ENCODE measurements at regions of chr3 and their contacts with region 1.

Region 1: GRCh38 chr3:108090701-108091451 is at the start of gene CD47:
- DNase-seq: no peak
- ATAC-seq: peak; percentile 72
- H3K4me3 ChIP-seq: peak within 1 kb of the TSS; percentile 95
- H3K27ac ChIP-seq: peak within 1 kb of the TSS; percentile 95
- H3K4me1 ChIP-seq: peaks cover 12% of the 10 kb centered on the region; the same call in 1 of the 2 replicates
- H3K27me3 ChIP-seq: no peaks in the 10 kb centered on the region
- CTCF ChIP-seq: no peak
- EP300 ChIP-seq: no peak
- POLR2A ChIP-seq: peak; percentile 85
- RAD21 ChIP-seq: no peak
- polyA plus RNA-seq, gene CD47: 22.9 to 61.6 TPM

Region 2: GRCh38 chr3:107938143-107938542 is 152.7 kb before region 1 on chr3:
- CTCF ChIA-PET with region 1: no interaction called
- POLR2A ChIA-PET with region 1: no interaction called
- RAD21 ChIA-PET with region 1: no interaction called
- SMC1A ChIA-PET with region 1: no interaction called
- in situ Hi-C with region 1: no loop called
- intact Hi-C with region 1: no loop called
- DNase-seq: no peak
- ATAC-seq: no peak
- H3K4me3 ChIP-seq: no peak overlapping the region
- H3K27ac ChIP-seq: no peak overlapping the region
- H3K4me1 ChIP-seq: no peaks in the 10 kb centered on the region
- H3K27me3 ChIP-seq: no peaks in the 10 kb centered on the region; a peak in 1 of 4 replicates
- CTCF ChIP-seq: peak; percentile 19 to 47 (median 25); a peak in 4 of 6 replicates
- EP300 ChIP-seq: no peak
- POLR2A ChIP-seq: no peak
- RAD21 ChIP-seq: peak; percentile 62

Region 3: DNA sequence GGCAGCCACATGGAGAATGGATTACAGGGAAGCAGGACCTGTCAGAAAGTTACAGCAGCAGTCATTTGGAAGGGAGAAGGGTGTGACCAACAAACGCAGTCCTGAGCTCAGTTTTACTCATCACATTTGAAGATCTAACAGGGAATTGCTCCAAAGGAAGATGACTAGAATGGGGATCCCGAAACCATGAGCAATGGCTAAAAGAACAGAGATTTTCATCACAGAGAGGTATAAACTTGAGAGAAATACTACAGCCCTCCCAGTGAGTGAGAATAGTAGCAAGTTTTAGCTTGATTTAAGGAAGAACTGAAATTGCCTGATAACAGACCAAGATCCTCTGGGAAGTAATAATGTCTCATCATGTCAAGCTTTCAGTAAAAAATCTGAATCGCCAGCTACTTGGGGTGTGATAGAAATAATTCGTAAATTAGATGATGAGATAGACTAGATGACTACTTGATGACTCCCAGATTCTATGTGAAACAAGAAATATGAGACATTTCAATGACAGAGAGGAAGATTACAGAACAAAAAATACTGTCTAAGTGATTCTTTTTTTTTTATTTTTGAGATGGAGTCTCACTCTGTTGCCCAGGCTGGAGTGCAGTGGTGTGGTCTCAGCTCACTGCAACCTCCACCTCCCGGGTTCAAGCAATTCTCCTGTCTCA is 17.0 kb before region 1 on chr3:
- CTCF ChIA-PET with region 1: interaction called, 4 read pairs
- POLR2A ChIA-PET with region 1: interaction called, 5 read pairs
- RAD21 ChIA-PET with region 1: interaction called, 4 read pairs
- SMC1A ChIA-PET with region 1: interaction called, 20 read pairs
- in situ Hi-C with region 1: no loop called
- intact Hi-C with region 1: no loop called
- DNase-seq: no peak
- ATAC-seq: no peak
- H3K4me3 ChIP-seq: no peak overlapping the region
- H3K27ac ChIP-seq: no peak overlapping the region
- H3K4me1 ChIP-seq: no peaks in the 10 kb centered on the region
- H3K27me3 ChIP-seq: no peaks in the 10 kb centered on the region
- CTCF ChIP-seq: no peak
- EP300 ChIP-seq: no peak
- POLR2A ChIP-seq: no peak
- RAD21 ChIP-seq: no peak

Region 4: GRCh38 chr3:108100906-108101660 is 10.2 kb after region 1 on chr3:
- CTCF ChIA-PET with region 1: interaction called, 8 read pairs
- POLR2A ChIA-PET with region 1: interaction called, 17 read pairs
- RAD21 ChIA-PET with region 1: interaction called, 7 read pairs
- SMC1A ChIA-PET with region 1: interaction called, 23 read pairs
- in situ Hi-C with region 1: no loop called
- intact Hi-C with region 1: loop called (anchors 1 kb)
- DNase-seq: peak; percentile 96
- ATAC-seq: peak; percentile 89
- H3K4me3 ChIP-seq: peak overlapping the region; percentile 26; the same call in 1 of the 2 replicates
- H3K27ac ChIP-seq: peak overlapping the region; percentile 81
- H3K4me1 ChIP-seq: peaks cover 36% of the 10 kb centered on the region
- H3K27me3 ChIP-seq: no peaks in the 10 kb centered on the region
- CTCF ChIP-seq: no peak
- EP300 ChIP-seq: peak; percentile 86 to 92
- POLR2A ChIP-seq: no peak
- RAD21 ChIP-seq: no peak

Region 5: GRCh38 chr3:108130701-108131474 is 40.0 kb after region 1 on chr3:
- CTCF ChIA-PET with region 1: interaction called, 12 read pairs
- POLR2A ChIA-PET with region 1: interaction called, 5 read pairs
- RAD21 ChIA-PET with region 1: interaction called, 23 read pairs
- SMC1A ChIA-PET with region 1: interaction called, 31 read pairs
- in situ Hi-C with region 1: no loop called
- intact Hi-C with region 1: no loop called
- DNase-seq: no peak
- ATAC-seq: no peak
- H3K4me3 ChIP-seq: peak overlapping the region; percentile 13; the same call in 1 of the 2 replicates
- H3K27ac ChIP-seq: no peak overlapping the region
- H3K4me1 ChIP-seq: peaks cover 49% of the 10 kb centered on the region
- H3K27me3 ChIP-seq: no peaks in the 10 kb centered on the region
- CTCF ChIP-seq: no peak
- EP300 ChIP-seq: no peak
- POLR2A ChIP-seq: no peak
- RAD21 ChIP-seq: no peak

Region 6: DNA sequence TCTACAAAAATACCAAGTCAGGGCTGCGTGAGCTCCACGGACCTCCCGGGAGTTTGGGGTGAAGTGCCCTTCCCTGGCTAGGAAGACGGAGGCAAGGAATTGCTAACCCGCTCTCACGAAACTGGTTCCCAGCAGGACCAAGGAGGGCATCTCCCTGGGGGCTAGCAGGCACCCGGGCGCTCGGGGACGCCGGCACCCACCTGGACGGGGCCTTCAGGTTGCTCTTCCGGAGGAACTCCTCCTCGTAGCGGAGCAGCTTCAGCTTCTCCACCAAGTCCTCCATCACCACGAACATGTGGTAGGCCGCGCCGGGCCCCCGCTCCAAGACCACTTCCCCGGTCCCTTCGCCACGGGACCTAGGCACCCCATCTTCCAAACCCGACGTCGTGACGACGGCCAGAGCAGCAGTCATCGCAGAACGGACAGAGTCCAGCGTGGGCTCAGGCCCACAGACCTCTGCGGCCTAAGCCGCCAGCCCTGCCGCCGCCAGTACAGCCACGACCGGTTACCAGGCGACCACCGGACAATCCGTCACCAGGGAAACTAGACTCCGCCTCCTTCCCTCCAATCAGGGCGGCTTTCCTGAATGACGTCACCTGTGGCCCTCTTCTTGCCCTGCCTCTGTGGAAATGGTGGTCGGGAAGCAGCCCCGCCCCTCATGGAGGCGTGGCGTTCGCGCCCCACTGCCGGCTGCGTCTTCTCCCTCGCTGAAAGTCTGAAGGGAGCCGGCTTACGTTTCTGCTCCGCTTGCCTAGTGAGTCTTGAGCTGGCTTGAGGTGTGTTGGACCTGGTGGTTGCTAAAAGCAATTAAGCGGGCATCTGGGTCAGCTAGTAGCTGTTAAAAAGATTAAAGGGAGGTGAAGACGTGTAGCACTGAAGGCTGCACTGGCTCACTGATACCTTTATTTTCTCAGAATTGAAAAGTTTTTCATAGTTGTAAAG is 131.3 kb after region 1 on chr3 and contains the start of gene IFT57:
- CTCF ChIA-PET with region 1: no interaction called
- POLR2A ChIA-PET with region 1: no interaction called
- RAD21 ChIA-PET with region 1: interaction called, 3 read pairs
- SMC1A ChIA-PET with region 1: interaction called, 3 read pairs
- in situ Hi-C with region 1: no loop called
- intact Hi-C with region 1: loop called (anchors 2 kb)
- DNase-seq: peak; percentile 92
- ATAC-seq: peak; percentile 94
- H3K4me3 ChIP-seq: peak within 1 kb of the TSS; percentile 67
- H3K27ac ChIP-seq: peak within 1 kb of the TSS; percentile 65
- H3K4me1 ChIP-seq: peaks cover 9% of the 10 kb centered on the region; the same call in 1 of the 2 replicates
- H3K27me3 ChIP-seq: no peaks in the 10 kb centered on the region
- CTCF ChIP-seq: no peak
- EP300 ChIP-seq: 0 out of 4 replicates have a peak, but pooled peaks of 1 of the 2 experiments have one; percentile 10
- POLR2A ChIP-seq: peak; percentile 75
- RAD21 ChIP-seq: peak; percentile 11; the same call in 1 of the 2 replicates
- polyA plus RNA-seq, gene IFT57: 1.8 to 2.8 TPM

Region 7: DNA sequence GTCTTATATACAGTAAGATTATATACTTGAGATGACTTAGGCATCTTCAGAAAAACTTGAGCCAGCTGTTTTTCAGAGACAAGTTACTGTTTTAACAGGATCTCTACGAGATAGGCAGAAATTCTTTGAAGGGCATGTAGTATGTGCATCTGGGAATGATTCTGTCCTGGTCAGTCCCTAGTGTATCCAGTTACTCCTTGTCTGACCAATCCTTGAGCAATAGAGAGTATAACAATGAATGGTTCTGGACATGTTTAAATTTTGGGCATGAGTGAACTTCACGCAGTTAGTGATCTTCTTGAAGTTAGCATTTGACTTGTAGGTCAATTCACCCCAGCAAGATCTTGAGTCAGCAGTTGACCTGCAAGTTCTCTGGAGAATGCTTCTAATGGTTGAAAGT is 180.8 kb after region 1 on chr3:
- CTCF ChIA-PET with region 1: no interaction called
- POLR2A ChIA-PET with region 1: no interaction called
- RAD21 ChIA-PET with region 1: no interaction called
- SMC1A ChIA-PET with region 1: no interaction called
- in situ Hi-C with region 1: no loop called
- intact Hi-C with region 1: no loop called
- DNase-seq: no peak
- ATAC-seq: no peak
- H3K4me3 ChIP-seq: no peak overlapping the region
- H3K27ac ChIP-seq: no peak overlapping the region
- H3K4me1 ChIP-seq: no peaks in the 10 kb centered on the region
- H3K27me3 ChIP-seq: no peaks in the 10 kb centered on the region
- CTCF ChIP-seq: no peak
- EP300 ChIP-seq: no peak
- POLR2A ChIP-seq: no peak
- RAD21 ChIP-seq: no peak

Region 8: DNA sequence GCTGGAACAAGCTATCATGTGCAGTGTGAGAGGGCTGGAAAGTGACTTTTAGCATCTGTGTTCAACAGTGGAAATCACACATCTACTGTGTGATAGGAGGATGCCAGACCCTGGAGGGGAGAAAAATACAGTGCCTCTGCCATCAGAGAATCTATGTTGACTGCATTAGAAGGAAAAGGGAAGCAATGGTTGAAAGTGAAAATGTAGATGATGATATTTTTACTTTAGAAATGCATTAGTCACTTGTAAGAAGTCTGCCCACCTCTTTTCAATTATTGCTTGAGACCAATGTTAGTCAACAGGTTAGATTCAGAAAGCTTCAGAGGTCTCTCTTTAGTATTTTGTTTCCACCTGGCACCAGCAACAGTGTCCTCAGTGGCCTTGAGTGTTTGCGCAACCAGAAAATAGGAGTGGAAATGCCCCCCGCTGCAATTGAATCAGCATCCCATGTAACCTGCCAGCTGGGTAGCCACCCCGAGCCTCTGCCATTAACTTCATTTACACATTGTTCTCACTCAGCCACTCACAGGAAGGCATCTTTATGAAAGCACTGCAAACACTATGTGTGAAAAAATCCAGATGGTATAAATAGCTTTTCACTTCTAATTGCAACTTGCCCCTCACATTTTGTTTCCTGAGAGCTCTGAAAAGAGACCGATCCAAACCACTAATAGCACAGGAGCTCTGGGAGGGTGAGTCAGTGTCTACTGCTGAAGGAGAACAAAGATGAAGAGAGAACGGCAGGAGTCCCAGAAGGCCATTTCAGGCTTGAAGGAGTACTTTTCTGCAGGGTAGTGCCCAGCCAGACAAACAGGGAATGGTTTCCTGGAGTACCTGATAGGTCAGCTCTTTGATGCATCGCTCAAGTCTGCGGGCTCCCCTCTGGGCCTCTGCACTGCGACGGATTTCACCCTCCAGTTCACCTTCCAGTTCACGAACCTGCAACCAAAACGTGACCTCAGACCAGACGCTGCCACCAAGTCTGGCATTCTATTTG is 297.6 kb after region 1 on chr3:
- CTCF ChIA-PET with region 1: no interaction called
- POLR2A ChIA-PET with region 1: no interaction called
- RAD21 ChIA-PET with region 1: no interaction called
- SMC1A ChIA-PET with region 1: interaction called, 3 read pairs
- in situ Hi-C with region 1: no loop called
- intact Hi-C with region 1: loop called (anchors 5 kb)
- DNase-seq: peak; percentile 70
- ATAC-seq: peak; percentile 84
- H3K4me3 ChIP-seq: peak overlapping the region; percentile 42
- H3K27ac ChIP-seq: peak overlapping the region; percentile 33; the same call in 1 of the 2 replicates
- H3K4me1 ChIP-seq: peaks cover 33% of the 10 kb centered on the region
- H3K27me3 ChIP-seq: no peaks in the 10 kb centered on the region
- CTCF ChIP-seq: no peak
- EP300 ChIP-seq: peak; percentile 38 to 48; a peak in 1 of 4 replicates
- POLR2A ChIP-seq: no peak
- RAD21 ChIP-seq: no peak

Region 9: DNA sequence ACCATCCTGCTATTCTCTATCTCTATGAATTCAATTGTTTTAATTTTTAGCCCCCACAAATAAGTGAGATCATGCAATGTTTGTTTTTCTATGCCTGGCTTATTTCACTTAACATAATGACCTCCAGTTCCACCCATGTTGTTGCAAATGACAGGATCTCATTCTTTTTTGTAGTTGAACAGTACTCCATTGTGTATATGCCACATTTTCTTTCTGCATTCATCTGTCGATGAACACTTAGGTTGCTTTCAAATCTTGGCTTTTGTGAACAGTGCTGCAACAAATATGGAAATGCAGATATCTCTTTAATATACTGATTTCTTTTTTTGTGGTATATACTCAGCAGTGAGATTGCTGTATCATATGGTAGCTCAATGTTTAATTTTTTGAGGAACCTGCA is 607.6 kb after region 1 on chr3:
- CTCF ChIA-PET with region 1: no interaction called
- POLR2A ChIA-PET with region 1: no interaction called
- RAD21 ChIA-PET with region 1: no interaction called
- SMC1A ChIA-PET with region 1: no interaction called
- in situ Hi-C with region 1: no loop called
- intact Hi-C with region 1: no loop called
- DNase-seq: no peak
- ATAC-seq: no peak
- H3K4me3 ChIP-seq: no peak overlapping the region
- H3K27ac ChIP-seq: no peak overlapping the region
- H3K4me1 ChIP-seq: no peaks in the 10 kb centered on the region
- H3K27me3 ChIP-seq: no peaks in the 10 kb centered on the region
- CTCF ChIP-seq: no peak
- EP300 ChIP-seq: no peak
- POLR2A ChIP-seq: no peak
- RAD21 ChIP-seq: no peak